K562 (cell line): ENCODE measurements at regions of chr2 and their contacts with region 1.

Region 1: GRCh38 chr2:72150157-72150865 is 2.6 kb upstream of the CYP26B1 start:
- DNase-seq: peak; percentile 74 to 81 (median 76)
- ATAC-seq: peak; percentile 93
- H3K4me3 ChIP-seq: no peak overlapping the region
- H3K27ac ChIP-seq: no peak overlapping the region
- H3K4me1 ChIP-seq: peaks cover 0 to 20% of the 10 kb centered on the region in 2 experiments; a peak in 2 of 5 replicates
- H3K27me3 ChIP-seq: peaks cover 13 to 63% of the 10 kb centered on the region in 2 experiments; a peak in 4 of 5 replicates
- CTCF ChIP-seq: peak; percentile 82 to 87 (median 83)
- EP300 ChIP-seq: no peak
- POLR2A ChIP-seq: no peak
- RAD21 ChIP-seq: peak; percentile 92 to 94

Region 2: GRCh38 chr2:71530641-71531332 is 619.5 kb before region 1 on chr2:
- CTCF ChIA-PET with region 1: interaction called, 3 read pairs
- POLR2A ChIA-PET with region 1: no interaction called
- in situ Hi-C with region 1: loop called (anchors 10 kb)
- intact Hi-C with region 1: loop called (anchors 5 kb)
- DNase-seq: peak; percentile 59 to 80 (median 76)
- ATAC-seq: peak; percentile 96
- H3K4me3 ChIP-seq: no peak overlapping the region
- H3K27ac ChIP-seq: no peak overlapping the region
- H3K4me1 ChIP-seq: no peaks in the 10 kb centered on the region; a peak in 1 of 5 replicates
- H3K27me3 ChIP-seq: peaks cover 11 to 32% of the 10 kb centered on the region in 2 experiments; a peak in 4 of 5 replicates
- CTCF ChIP-seq: peak; percentile 72 to 80 (median 72)
- EP300 ChIP-seq: no peak
- POLR2A ChIP-seq: no peak
- RAD21 ChIP-seq: peak; percentile 59 to 77

Region 3: DNA sequence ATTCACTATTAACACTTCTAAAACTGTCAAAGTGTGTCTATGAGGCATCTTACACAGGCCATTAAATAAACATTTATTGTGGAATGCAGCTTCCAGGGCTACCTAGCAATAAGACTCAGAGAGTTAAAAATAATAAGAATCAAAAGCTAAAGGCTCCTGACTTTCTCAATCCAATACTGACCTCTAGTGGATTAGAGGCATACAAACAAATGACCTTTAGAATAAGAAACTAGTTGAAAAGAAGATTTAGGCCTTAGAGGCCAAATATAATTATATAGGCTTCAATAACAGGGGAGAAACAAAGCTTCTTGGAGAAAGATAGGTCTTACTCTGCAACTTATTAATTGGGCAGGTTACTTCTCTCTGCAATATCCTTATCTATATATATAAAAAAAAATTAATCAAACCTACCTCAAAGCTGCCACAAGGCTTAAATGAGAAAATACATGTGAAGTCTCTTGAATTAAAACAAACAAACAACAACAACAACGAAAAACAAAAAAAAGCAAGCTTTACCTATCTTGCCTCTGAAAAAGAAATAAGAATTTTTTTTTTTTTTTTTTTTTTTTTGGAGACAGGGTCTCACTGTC is 429.4 kb after region 1 on chr2:
- CTCF ChIA-PET with region 1: interaction called, 3 read pairs
- POLR2A ChIA-PET with region 1: no interaction called
- in situ Hi-C with region 1: loop called (anchors 5 kb)
- intact Hi-C with region 1: loop called (anchors 1 kb)
- DNase-seq: peak in 3 of 4 experiments; percentile 7 to 62 (median 17)
- ATAC-seq: peak; percentile 77
- H3K4me3 ChIP-seq: no peak overlapping the region
- H3K27ac ChIP-seq: no peak overlapping the region
- H3K4me1 ChIP-seq: no peaks in the 10 kb centered on the region
- H3K27me3 ChIP-seq: no peaks in the 10 kb centered on the region
- CTCF ChIP-seq: peak; percentile 49 to 81 (median 54); a peak in 4 of 6 replicates
- EP300 ChIP-seq: no peak
- POLR2A ChIP-seq: no peak
- RAD21 ChIP-seq: peak; percentile 91 to 94

Region 4: DNA sequence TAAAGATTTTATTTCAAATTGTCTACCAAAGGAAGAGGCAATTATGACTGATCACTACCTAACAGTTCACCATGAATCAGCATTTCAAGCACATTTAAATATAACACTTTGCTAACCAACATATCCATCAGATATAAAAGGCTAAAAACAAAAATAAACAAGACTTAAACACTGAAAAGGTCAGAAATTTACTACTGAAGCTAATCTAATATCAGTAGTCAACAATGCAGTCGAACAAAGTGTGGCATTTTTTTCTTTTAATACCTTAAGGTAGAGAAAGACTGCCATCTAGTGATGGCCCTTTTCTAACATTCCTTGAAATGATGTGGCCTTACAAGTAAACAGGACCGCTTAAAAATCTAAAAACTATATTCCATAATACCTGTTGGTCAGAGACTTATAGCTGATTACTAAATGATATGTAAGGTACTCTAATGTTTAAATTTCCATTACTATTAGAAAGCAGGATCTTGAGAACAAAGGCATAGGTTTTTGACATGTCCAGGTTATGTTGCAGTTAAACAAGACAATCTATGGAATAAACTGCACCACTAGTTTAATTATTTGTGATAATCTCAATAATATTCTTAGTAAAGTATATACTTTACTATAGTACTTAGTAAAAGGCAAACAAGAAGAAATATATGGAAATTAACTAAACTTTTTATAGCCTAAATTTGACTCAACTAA is 595.5 kb after region 1 on chr2:
- CTCF ChIA-PET with region 1: no interaction called
- POLR2A ChIA-PET with region 1: no interaction called
- in situ Hi-C with region 1: no loop called
- intact Hi-C with region 1: loop called (anchors 5 kb)
- DNase-seq: peak; percentile 17 to 76 (median 32)
- ATAC-seq: 0 out of 3 replicates have a peak, but pooled peaks have one; percentile 56
- H3K4me3 ChIP-seq: no peak overlapping the region
- H3K27ac ChIP-seq: no peak overlapping the region
- H3K4me1 ChIP-seq: no peaks in the 10 kb centered on the region
- H3K27me3 ChIP-seq: no peaks in the 10 kb centered on the region
- CTCF ChIP-seq: peak; percentile 38 to 81 (median 54); a peak in 5 of 6 replicates
- EP300 ChIP-seq: no peak
- POLR2A ChIP-seq: no peak
- RAD21 ChIP-seq: peak; percentile 84 to 92